Calu3 (cell line): ENCODE measurements at regions of chr14 and their contacts with region 1.

Region 1: GRCh38 chr14:58107947-58108552 is 44.0 kb downstream of the ARMH4 start:
- DNase-seq: peak; percentile 30
- H3K4me3 Mint-ChIP-seq: no peak overlapping the region
- H3K27ac Mint-ChIP-seq: no peak overlapping the region
- H3K4me1 Mint-ChIP-seq: peaks cover 15% of the 10 kb centered on the region
- H3K27me3 Mint-ChIP-seq: peaks cover 70% of the 10 kb centered on the region
- CTCF ChIP-seq: peak; percentile 37

Region 2: GRCh38 chr14:57999471-57999870 is 108.6 kb before region 1 on chr14:
- CTCF ChIA-PET with region 1: no interaction called
- intact Hi-C with region 1: no loop called
- DNase-seq: no peak
- H3K4me3 Mint-ChIP-seq: no peak overlapping the region
- H3K27ac Mint-ChIP-seq: no peak overlapping the region
- H3K4me1 Mint-ChIP-seq: no peaks in the 10 kb centered on the region
- H3K27me3 Mint-ChIP-seq: peaks cover 60% of the 10 kb centered on the region
- CTCF ChIP-seq: no peak

Region 3: GRCh38 chr14:58166005-58166983 is 58.2 kb after region 1 on chr14:
- CTCF ChIA-PET with region 1: interaction called, 3 read pairs
- intact Hi-C with region 1: loop called (anchors 1 kb)
- DNase-seq: peak; percentile 85
- H3K4me3 Mint-ChIP-seq: no peak overlapping the region
- H3K27ac Mint-ChIP-seq: no peak overlapping the region
- H3K4me1 Mint-ChIP-seq: peaks cover 9% of the 10 kb centered on the region
- H3K27me3 Mint-ChIP-seq: peaks cover 39% of the 10 kb centered on the region
- CTCF ChIP-seq: peak; percentile 73

Region 4: GRCh38 chr14:58239244-58240195 is 131.5 kb after region 1 on chr14:
- CTCF ChIA-PET with region 1: no interaction called
- intact Hi-C with region 1: loop called (anchors 10 kb)
- DNase-seq: peak; percentile 74
- H3K4me3 Mint-ChIP-seq: no peak overlapping the region
- H3K27ac Mint-ChIP-seq: no peak overlapping the region
- H3K4me1 Mint-ChIP-seq: peaks cover 12% of the 10 kb centered on the region
- H3K27me3 Mint-ChIP-seq: no peaks in the 10 kb centered on the region
- CTCF ChIP-seq: no peak

Region 5: GRCh38 chr14:58362798-58363412 is 254.9 kb after region 1 on chr14:
- CTCF ChIA-PET with region 1: no interaction called
- intact Hi-C with region 1: loop called (anchors 1 kb)
- DNase-seq: no peak
- H3K4me3 Mint-ChIP-seq: no peak overlapping the region
- H3K27ac Mint-ChIP-seq: no peak overlapping the region
- H3K4me1 Mint-ChIP-seq: no peaks in the 10 kb centered on the region
- H3K27me3 Mint-ChIP-seq: no peaks in the 10 kb centered on the region
- CTCF ChIP-seq: no peak

Region 6: DNA sequence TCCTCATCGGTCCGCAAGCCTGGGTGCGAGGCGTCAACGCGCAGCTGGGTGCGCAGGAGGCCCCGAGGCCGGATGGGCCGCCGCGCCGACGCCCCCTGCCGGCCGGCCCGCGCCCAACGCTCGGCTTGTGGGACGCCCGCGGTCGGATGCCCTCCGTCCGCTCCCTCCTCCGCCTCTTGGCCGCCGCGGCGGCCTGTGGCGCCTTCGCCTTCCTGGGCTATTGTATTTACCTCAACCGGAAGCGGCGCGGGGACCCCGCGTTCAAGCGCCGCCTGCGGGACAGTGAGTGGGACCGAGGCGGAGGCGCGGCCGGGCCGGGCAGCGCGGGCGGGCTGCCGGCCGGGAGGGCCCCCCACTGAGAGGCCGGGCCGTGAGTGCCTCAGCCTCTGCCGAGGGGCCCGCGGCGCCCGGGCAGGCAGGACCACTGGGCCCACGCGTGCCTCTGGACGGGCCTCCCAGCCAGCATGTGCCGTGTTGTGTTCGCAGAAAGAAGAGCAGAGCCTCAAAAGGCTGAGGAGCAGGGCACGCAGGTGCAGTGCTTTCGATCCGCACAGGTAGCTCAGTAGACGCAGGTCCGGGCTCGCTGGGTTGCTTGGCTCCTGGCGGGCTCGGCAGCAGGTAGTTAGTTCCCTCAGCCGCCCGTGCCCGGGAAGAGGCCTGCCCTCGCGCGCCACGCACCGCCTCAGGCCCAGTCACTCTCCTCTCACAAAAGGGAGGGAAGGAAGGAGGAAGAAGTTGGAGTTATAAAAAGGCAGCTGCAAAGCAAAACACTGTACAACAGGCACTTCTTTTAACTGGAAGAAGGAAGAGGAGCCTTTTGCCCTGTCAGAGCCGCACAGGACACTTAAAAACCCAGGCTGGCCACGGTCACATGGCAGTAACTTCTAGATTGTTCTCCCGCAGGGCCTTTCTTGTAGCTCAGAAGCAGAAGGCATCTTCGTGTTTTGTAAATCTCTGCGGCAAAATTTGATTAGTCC is 288.1 kb after region 1 on chr14 and contains the start of gene TOMM20L:
- CTCF ChIA-PET with region 1: no interaction called
- intact Hi-C with region 1: loop called (anchors 5 kb)
- DNase-seq: peak; percentile 80
- H3K4me3 Mint-ChIP-seq: peak within 1 kb of the TSS; percentile 71
- H3K27ac Mint-ChIP-seq: no peak within 1 kb of the TSS
- H3K4me1 Mint-ChIP-seq: peaks cover 7% of the 10 kb centered on the region
- H3K27me3 Mint-ChIP-seq: no peaks in the 10 kb centered on the region
- CTCF ChIP-seq: peak; percentile 85
- total RNA-seq, gene TOMM20L: not detected in 2 replicates

Region 7: DNA sequence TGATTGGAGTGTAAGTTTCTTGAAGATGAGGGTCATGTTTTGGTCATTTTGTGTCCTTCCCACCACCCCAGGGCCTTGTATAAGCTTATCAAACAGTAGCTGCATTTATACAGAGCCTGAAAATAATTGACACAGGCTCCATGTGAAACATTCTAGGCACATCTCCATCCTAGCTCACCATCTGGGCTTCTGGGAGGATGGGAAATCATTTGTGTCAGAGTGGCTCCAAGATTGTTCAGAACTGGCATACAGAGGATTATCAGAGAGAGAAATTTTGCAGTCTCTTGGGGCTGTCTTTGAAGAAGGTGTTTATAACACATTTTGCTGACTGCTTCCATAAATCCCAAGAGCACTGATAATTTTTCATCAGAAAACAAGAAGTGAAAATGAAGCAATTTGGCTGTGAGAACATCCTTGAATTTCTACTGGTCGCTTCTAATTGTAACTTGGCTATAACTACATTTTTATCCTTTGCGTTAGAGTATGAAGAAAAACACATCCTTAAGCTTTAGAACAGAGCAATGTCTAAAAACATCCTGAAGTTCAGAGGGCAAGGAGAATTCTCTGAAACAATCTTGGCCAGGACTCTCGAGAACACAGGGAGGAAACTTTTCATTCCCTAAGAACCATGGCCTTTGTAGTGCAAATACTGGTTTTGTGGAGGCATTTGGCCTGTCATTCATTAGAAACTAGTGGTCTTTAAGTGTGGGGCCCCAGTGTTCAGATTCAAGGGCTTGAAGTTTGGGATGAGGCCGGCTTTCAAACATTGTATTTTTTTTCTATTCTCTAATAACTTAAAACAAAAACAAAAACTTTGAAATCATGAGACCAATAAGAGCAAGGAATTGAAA is 680.8 kb after region 1 on chr14:
- CTCF ChIA-PET with region 1: no interaction called
- intact Hi-C with region 1: no loop called
- DNase-seq: no peak
- H3K4me3 Mint-ChIP-seq: no peak overlapping the region
- H3K27ac Mint-ChIP-seq: no peak overlapping the region
- H3K4me1 Mint-ChIP-seq: peaks cover 15% of the 10 kb centered on the region
- H3K27me3 Mint-ChIP-seq: no peaks in the 10 kb centered on the region
- CTCF ChIP-seq: no peak